ENCODE measurements at regions of chr15 and their contacts with region 1.

Region 1: GRCh38 chr15:74889883-74890664 is at the start of gene MPI:
- DNase-seq: peak; percentile 95
- ATAC-seq: peak; percentile 94
- total RNA-seq, gene MPI: 60.8 TPM

Region 2: DNA sequence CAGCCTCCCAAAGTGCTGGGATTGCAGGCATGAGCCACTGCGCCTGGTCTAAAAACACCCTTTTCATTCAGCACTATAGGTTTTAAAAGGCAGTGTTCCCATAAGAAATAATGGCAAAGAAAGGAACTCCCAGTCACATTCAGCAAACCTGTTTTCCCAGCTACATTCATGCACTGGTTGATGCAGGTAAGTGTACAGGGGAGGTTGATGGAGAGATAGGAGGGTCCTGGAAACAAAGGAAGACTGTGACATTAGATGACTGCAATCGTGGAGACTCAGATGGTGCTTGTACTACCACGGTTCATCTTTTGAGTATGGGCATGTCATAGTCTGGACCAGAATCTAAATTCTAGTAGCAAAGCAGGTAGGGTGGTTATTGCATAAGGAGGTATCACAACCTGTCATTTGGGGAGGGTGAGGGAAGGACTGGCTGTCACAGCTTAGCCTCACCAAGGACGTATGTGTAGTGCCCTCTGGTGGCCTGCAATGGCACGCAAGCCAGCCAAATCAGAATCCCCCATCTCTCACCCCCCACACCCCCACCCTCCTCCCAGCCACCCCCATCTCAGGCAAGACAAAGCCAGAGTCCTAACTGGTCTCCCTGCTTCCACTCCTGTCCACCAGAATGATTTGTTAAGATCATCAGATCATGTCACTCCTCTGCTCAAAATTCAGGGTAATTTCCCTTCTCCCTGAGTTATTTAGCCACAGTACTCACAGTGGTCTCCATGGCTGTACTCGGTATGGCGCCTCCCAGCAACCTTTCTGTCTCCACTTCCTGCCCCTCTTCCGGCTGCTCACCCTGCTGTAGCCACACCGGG is 400.3 kb before region 1 on chr15:
- intact Hi-C with region 1: no loop called
- DNase-seq: no peak
- ATAC-seq: peak; percentile 65

Region 3: DNA sequence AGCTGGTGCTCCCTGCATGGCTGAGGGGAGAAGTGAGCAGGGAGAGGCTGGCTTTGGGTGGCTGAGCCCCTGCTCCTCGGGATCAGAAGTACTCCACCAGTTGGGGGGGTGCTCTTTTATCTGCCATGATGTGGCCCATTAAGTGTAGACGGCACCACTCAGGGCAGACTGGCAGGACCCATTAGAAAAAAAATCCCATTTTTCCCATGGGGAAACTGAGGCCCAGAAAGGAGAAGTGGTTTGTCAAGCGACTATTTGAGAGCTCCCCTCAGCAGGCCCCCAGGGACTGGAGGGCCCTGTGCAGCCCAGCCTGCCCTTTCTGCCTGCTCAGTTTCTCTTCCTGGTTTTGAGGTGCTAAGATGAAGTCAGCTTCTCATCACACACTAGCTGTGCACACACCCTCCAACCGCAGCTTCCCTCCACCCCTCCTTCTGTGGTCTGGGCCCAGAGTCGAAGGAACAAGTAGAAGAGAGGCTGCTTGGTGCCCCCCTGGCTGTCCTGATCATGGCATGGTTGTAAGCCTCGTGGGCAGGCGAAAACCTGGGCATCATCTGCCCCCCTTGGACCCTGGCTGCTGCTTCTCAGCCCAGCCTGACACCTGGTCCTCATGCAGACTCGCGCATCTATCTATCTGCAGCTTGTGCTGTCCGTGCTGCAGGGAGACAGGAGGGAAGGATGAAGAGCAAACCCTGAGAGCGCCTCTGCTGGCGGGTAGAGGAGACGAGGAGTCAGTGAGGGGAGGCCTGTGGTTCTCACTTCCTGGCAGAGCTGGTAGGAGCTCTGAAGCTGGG is 102.6 kb before region 1 on chr15:
- intact Hi-C with region 1: loop called (anchors 5 kb)
- DNase-seq: peak; percentile 88
- ATAC-seq: peak; percentile 34

Region 4: DNA sequence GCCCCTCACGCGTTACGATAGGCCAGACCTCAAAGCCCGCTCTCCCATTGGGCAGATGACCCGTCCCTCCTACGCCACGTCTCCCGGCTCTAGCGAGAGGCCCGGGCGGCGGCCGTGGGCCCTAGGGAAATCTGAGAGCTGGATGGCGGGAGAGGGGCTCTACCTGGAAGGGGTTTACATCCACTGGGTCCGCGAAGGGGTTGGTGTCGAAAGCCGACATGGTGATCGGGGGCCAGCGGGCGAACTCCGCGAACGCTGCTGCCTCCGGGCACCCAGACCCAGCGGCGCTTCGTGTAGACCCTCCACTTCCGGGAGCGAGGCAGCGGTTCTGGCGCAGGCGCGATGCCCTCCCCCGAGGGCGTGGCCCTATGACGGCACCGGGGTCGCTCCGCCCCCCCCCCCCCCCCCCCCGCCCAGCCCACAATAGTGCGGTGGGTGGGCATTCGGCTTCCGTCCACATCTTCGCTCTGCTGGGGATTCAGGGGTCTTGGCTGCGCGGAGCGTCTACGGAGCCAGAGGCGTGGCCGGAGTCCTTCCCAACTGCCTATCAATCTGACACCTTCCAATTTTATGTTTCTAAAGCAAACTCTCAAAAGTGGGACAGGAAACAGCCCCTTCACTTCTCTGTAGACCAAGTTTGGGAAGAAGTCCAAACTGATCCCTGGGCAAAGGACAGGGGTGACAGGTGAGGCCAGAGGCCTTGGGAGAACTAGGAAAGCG is 16.9 kb before region 1 on chr15 and contains the start of gene SCAMP2:
- intact Hi-C with region 1: loop called (anchors 2 kb)
- DNase-seq: peak; percentile 97
- ATAC-seq: peak; percentile 95
- total RNA-seq, gene SCAMP2: 42.6 TPM

Region 5: DNA sequence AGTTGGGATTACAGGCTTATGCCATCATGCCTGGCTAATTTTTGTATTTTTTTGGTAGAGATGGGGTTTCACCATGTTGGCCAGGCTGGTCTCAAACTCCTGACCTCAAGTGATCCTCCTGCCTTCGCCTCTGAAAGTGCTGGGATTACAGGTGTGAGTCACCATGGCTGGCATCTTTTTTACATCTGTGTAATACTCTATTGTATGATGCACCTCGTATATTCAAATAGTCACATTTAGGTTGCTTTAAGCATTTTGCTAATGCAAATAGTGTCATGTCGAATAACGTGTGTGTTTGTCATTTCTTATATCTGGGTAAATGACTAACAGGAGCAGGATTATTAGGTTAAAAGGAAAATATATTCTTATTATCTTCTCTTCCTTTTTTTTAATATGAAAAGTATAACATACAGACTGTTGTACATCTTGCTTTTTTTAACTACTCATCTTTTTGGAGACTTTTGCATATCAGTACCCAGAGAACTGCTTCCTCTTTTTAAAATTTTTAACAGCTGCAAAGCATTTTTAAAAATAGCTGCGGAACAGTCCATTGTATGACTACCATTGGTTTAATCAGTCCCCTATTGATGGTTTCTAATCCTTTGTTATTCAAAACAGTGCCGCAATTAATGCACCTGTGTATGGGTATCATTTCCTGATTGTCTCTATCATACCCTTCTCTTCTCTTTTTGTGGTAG is 118.7 kb after region 1 on chr15:
- intact Hi-C with region 1: no loop called
- DNase-seq: no peak
- ATAC-seq: no peak

Region 6: GRCh38 chr15:75036314-75036649 is 146.2 kb after region 1 on chr15:
- intact Hi-C with region 1: no loop called
- DNase-seq: no peak
- ATAC-seq: no peak

Measured in Right ventricle myocardium inferior (tissue), 1 donor.